ENCODE measurements at regions of chr22 and their contacts with region 1.

Region 1: GRCh38 chr22:18070556-18071306 is 7.1 kb upstream of the PEX26 start:
- DNase-seq: no peak
- ATAC-seq: no peak
- H3K4me3 ChIP-seq: no peak overlapping the region
- H3K27ac ChIP-seq: no peak overlapping the region
- H3K4me1 ChIP-seq: peaks cover 0 to 29% (median 9%) of the 10 kb centered on the region in 12 donors
- H3K27me3 ChIP-seq: no peaks in the 10 kb centered on the region
- CTCF ChIP-seq: peak in 4 of 12 donors; percentile 15 to 21 (median 16)
- POLR2A ChIP-seq: no peak

Region 2: GRCh38 chr22:17742527-17742902 is 328.2 kb before region 1 on chr22:
- intact Hi-C with region 1: loop called in 8 of 10 experiments (anchors 5 to 10 kb)
- DNase-seq: peak; percentile 51 to 75 (median 62)
- ATAC-seq: peak; percentile 47 to 73 (median 68)
- H3K4me3 ChIP-seq: no peak overlapping the region
- H3K27ac ChIP-seq: no peak overlapping the region
- H3K4me1 ChIP-seq: peaks cover 0 to 16% (median 3%) of the 10 kb centered on the region in 12 donors
- H3K27me3 ChIP-seq: no peaks in the 10 kb centered on the region
- CTCF ChIP-seq: peak; percentile 67 to 80 (median 75)
- POLR2A ChIP-seq: no peak

Region 3: DNA sequence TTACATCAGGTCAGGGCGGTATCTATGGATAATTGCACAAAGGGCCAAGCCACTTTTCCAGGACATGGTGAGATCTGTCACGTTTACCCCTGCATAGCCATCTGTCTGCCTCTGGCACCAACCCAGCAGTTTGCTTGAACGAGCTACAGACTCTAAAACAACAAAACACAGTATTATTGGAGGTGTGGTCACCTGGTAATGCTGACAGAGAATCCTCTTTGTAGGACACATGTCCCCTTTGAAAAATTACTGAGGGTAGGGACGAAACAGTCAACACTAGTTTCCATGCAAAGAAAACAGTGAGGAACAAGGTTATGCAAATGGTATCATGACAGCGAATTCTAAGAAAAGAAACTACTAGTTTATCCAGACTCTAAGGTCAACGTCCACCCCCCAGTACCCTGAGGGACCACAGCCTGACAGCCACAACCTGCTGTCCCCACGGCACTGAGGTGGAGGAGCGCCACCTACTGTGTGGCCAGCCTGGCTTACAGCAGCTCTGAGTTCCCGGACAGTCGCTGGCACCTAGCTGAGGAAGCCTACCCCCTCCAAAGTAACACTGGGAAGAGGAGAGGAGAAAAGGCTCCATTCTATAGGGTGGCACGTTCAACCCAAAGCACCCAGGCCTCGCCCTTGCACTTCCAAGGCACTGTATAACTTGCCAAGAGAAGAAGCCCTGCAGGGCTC is 179.1 kb before region 1 on chr22:
- intact Hi-C with region 1: loop called in 4 of 10 experiments (anchors 5 to 10 kb)
- DNase-seq: peak in 4 of 5 donors; percentile 61 to 82 (median 68)
- ATAC-seq: peak; percentile 62 to 82 (median 72)
- H3K4me3 ChIP-seq: no peak overlapping the region
- H3K27ac ChIP-seq: peak overlapping the region; percentile 7 to 91 (median 80)
- H3K4me1 ChIP-seq: peaks cover 0 to 49% (median 18%) of the 10 kb centered on the region in 12 donors
- H3K27me3 ChIP-seq: no peaks in the 10 kb centered on the region
- CTCF ChIP-seq: peak; percentile 31 to 72 (median 58)
- POLR2A ChIP-seq: no peak

Region 4: DNA sequence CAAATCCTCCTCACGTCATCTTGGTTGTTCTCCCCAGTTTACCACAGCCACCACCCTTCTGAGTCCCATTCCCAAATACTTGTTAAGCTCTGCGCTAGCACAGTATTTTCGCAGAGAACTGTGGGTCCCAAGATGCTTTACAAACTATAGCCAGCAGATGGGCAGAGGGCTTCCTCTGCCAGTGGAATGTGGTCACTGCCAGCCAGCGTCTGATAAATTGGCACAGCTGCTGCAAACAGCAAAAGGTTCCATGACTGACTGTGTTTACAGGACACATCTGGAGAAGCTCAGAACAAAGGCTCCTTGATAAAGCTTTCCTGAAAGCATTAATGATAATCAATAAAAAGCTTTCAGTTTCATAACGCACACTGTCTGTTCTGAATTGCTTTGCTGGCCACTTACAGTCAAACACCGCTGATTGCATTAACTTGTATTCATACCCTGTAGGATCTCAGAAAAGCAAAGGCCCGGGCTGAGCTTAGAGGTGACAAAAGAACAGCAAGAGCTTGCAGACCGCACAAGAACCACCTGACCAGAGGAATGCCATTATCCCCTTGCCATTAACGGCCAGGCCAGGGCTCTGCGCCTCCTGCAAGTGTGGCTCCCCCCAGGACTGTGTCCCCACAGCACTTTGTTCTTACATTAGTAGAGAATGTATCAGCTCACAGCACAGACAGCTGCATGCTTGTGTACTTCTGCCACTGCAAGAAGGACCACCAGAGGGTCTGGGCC is 167.0 kb before region 1 on chr22:
- intact Hi-C with region 1: loop called in 6 of 10 experiments (anchors 5 to 10 kb)
- DNase-seq: peak in 2 of 5 donors; percentile 56 to 59
- ATAC-seq: peak; percentile 47 to 64 (median 60)
- H3K4me3 ChIP-seq: no peak overlapping the region
- H3K27ac ChIP-seq: peak overlapping the region in 10 of 12 donors; percentile 24 to 92 (median 54)
- H3K4me1 ChIP-seq: peaks cover 0 to 57% (median 25%) of the 10 kb centered on the region in 12 donors
- H3K27me3 ChIP-seq: no peaks in the 10 kb centered on the region
- CTCF ChIP-seq: no peak
- POLR2A ChIP-seq: no peak

Region 5: DNA sequence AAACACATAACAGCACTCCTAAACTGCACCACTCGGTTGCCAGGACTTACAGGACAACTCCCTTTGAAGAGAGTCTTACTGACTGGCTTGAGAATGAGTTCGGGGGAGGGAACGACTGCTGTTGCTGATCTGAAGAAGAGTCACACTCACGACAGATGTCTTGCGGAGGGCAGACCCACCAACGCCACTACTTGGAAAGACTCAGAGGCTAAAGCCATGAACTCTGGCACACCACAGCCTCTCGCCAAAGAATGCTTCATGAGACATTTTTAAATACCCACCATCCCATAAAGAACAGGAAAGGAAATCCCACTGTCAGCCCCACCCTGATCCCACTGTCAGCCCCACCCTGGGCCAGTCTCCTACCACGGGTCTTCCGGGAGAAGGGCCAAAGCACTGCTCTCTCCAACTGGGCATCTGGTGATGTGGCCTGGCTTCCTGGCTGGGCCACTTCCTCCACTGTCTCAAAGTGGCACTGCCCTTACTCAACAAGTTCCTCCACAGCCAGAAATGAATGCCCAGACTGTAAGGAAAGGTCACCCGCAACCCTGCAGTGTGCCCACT is 120.0 kb before region 1 on chr22:
- intact Hi-C with region 1: loop called in 1 of 10 experiments (anchors 5 kb)
- DNase-seq: peak in 4 of 5 donors; percentile 61 to 85 (median 68)
- ATAC-seq: peak; percentile 72 to 78 (median 74)
- H3K4me3 ChIP-seq: no peak overlapping the region
- H3K27ac ChIP-seq: peak overlapping the region; percentile 59 to 95 (median 79)
- H3K4me1 ChIP-seq: peaks cover 2 to 90% (median 46%) of the 10 kb centered on the region in 12 donors
- H3K27me3 ChIP-seq: no peaks in the 10 kb centered on the region
- CTCF ChIP-seq: no peak
- POLR2A ChIP-seq: no peak

Region 6: GRCh38 chr22:18001040-18001893 is 69.5 kb before region 1 on chr22:
- intact Hi-C with region 1: loop called in 3 of 10 experiments (anchors 5 kb)
- DNase-seq: peak; percentile 91 to 94 (median 92)
- ATAC-seq: peak; percentile 96 to 98 (median 97)
- H3K4me3 ChIP-seq: peak overlapping the region; percentile 65 to 99 (median 84)
- H3K27ac ChIP-seq: peak overlapping the region; percentile 86 to 98 (median 95)
- H3K4me1 ChIP-seq: peaks cover 0 to 37% (median 18%) of the 10 kb centered on the region in 12 donors
- H3K27me3 ChIP-seq: peaks cover 0 to 3% (median 0%) of the 10 kb centered on the region in 9 donors
- CTCF ChIP-seq: peak in 11 of 12 donors; percentile 19 to 67 (median 49)
- POLR2A ChIP-seq: peak in 1 of 2 donors; percentile 86

Region 7: DNA sequence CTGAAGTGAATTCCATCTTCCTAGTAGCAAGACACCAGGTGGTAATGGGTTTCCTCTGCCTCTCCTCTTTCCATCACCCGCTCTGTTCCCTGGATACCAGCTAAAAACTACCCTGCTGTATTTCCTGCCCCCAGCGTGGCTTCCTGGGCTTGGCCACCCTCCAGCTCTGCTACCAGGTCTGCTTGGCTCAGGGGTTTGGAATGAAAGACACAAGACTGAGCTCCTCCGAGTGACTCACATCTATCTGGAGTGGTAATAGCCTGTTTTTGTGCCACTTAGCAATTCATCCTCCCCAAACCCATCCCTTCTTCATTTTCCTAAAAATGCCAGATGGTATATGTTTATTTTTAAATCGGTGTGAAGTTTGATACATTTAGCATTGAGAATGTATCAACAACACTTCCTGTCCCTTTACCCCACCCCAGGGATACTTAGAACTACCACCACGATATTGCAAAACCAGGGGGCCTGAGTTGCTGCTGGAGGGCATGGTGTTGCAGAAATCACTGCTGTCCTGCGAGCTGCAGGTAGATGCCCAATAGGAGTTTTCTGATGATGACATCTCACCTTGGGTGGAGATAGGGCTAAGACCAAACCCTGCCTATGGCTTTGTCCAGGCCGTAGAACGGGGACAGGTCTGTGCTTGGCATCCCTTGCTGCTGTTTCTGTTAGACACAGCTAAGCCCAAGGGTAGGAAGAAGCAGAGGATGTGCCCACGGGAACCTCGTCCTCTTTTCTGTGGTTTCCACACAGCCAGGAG is 38.9 kb before region 1 on chr22:
- intact Hi-C with region 1: loop called in 5 of 10 experiments (anchors 5 to 10 kb)
- DNase-seq: peak in 3 of 5 donors; percentile 25 to 68 (median 36)
- ATAC-seq: peak; percentile 34 to 69 (median 45)
- H3K4me3 ChIP-seq: no peak overlapping the region
- H3K27ac ChIP-seq: peak overlapping the region in 10 of 12 donors; percentile 0 to 67 (median 40)
- H3K4me1 ChIP-seq: peaks cover 0 to 50% (median 16%) of the 10 kb centered on the region in 12 donors
- H3K27me3 ChIP-seq: no peaks in the 10 kb centered on the region
- CTCF ChIP-seq: no peak
- POLR2A ChIP-seq: no peak

Measured in heart left ventricle (tissue), 16 donors.